SK-N-SH (cell line): ENCODE measurements at regions of chr2 and their contacts with region 1.

Region 1: GRCh38 chr2:45993476-45993991 is 303.7 kb upstream of the EPAS1 start:
- DNase-seq: peak; percentile 70
- H3K4me3 ChIP-seq: no peak overlapping the region; a peak in 1 of 4 replicates
- H3K27ac ChIP-seq: no peak overlapping the region
- H3K4me1 ChIP-seq: peaks cover 0 to 5% of the 10 kb centered on the region in 2 experiments; a peak in 1 of 4 replicates
- H3K27me3 ChIP-seq: no peaks in the 10 kb centered on the region
- CTCF ChIP-seq: peak; percentile 94
- EP300 ChIP-seq: no peak
- RAD21 ChIP-seq: peak; percentile 93

Region 2: DNA sequence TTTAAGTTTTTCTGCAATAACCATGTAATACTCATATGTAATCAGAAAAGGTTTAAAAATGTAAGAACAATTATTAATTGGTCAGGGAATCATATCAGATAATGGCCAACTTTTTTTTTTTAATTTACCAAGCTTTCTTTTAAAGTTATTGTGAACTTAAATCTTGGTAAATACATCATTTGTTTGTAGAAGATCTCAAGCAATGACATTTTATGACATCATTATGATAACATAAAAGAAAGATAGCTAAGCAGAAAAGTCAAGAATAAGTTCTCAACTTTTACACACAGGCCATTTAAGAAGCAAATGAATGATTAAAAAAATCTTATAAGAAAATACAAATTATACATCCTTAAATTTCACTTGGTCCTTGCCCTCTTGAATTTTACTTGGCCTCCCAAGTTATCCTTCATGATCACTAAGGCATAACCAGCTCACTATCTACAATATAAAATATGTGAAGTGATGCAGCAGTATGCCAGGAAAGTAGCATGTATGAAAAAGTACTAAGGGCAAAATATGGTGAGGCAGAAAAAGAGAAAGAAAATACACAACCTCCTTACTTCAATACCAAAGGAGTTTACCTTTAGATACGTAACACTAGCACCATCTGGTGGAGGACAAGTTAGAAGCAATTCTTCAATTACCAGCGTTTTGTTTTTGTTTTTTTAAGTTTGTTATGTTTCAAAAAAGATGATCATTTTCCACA is 499.1 kb before region 1 on chr2:
- CTCF ChIA-PET with region 1: no interaction called
- POLR2A ChIA-PET with region 1: no interaction called
- DNase-seq: peak; percentile 56
- H3K4me3 ChIP-seq: peak overlapping the region in 1 of 2 experiments; percentile 7; a peak in 1 of 4 replicates
- H3K27ac ChIP-seq: no peak overlapping the region; a peak in 1 of 4 replicates
- H3K4me1 ChIP-seq: peaks cover 0 to 4% of the 10 kb centered on the region in 2 experiments; a peak in 1 of 4 replicates
- H3K27me3 ChIP-seq: no peaks in the 10 kb centered on the region
- CTCF ChIP-seq: peak; percentile 93
- EP300 ChIP-seq: no peak
- RAD21 ChIP-seq: peak; percentile 97

Region 3: DNA sequence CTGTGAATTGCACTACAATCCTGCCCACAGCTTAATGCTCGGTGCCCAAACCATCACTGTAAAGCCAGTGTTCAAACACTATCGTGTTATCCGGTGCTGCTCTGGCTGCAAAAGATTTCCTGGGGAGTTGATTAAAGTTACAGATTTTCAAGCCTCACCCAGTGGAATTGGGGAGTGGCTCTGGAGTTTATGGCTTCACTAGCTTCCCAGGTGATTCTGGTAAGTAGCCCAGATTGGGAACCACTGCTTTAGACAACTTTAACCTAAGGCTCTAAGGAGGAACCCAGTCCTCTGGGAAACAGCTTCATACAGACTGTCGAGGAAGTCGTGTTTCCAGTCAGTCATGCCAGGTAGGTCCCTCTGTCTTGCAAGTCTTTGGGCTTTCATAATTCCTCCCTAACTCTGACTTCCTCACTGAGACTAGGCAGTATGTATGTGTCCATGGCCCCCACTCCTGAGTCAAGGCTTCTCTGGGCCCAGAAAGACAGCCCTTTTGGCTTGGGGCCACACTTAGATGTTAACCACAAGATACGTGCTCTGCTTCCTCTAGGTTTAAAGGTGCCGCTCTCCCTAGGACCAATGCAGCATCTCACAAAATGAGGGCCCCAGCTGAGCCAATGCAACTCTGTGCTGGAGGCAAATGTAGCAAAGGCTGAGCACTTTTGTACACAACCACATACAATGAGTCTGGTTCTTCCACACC is 42.4 kb before region 1 on chr2:
- CTCF ChIA-PET with region 1: interaction called, 11 read pairs
- POLR2A ChIA-PET with region 1: no interaction called
- DNase-seq: no peak
- H3K4me3 ChIP-seq: no peak overlapping the region
- H3K27ac ChIP-seq: no peak overlapping the region
- H3K4me1 ChIP-seq: peaks cover 8 to 13% of the 10 kb centered on the region in 2 experiments; a peak in 3 of 4 replicates
- H3K27me3 ChIP-seq: no peaks in the 10 kb centered on the region
- CTCF ChIP-seq: no peak
- EP300 ChIP-seq: no peak
- RAD21 ChIP-seq: no peak

Region 4: DNA sequence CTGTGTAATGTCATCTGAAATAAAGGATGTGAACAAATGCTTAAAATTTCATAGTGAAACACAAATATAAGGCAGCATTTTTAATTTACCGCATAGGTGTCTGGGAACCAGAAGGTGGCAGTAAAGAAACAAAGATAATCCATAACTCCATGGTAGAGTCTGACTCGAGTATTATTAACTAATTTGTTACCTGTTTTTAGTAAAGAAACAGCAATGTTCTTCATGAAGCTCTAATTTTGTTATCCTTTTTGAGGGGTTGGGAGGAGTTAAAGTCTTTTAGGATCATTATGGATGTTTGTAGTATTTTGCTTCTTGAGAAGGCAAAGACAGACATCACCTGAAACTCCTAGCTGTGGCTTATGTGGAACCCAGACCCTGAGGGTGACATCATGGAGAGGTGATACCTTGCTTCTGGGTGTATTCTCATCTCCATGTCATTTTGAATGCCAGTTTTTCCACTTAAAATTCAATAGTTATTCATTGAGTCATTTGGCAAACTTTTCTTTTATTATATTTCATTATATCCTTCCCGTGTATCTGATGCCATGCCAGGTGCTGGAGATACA is 17.5 kb after region 1 on chr2:
- CTCF ChIA-PET with region 1: interaction called, 89 read pairs
- POLR2A ChIA-PET with region 1: no interaction called
- DNase-seq: peak; percentile 72
- H3K4me3 ChIP-seq: no peak overlapping the region
- H3K27ac ChIP-seq: peak overlapping the region in 1 of 2 experiments; percentile 28; a peak in 2 of 4 replicates
- H3K4me1 ChIP-seq: peaks cover 8 to 23% of the 10 kb centered on the region in 2 experiments; a peak in 3 of 4 replicates
- H3K27me3 ChIP-seq: no peaks in the 10 kb centered on the region
- CTCF ChIP-seq: peak; percentile 92
- EP300 ChIP-seq: no peak
- RAD21 ChIP-seq: peak; percentile 93

Region 5: GRCh38 chr2:46062637-46063412 is 69.3 kb after region 1 on chr2:
- CTCF ChIA-PET with region 1: interaction called, 16 read pairs
- POLR2A ChIA-PET with region 1: no interaction called
- DNase-seq: peak; percentile 82
- H3K4me3 ChIP-seq: no peak overlapping the region; a peak in 1 of 4 replicates
- H3K27ac ChIP-seq: no peak overlapping the region
- H3K4me1 ChIP-seq: peaks cover 14 to 25% of the 10 kb centered on the region in 2 experiments
- H3K27me3 ChIP-seq: no peaks in the 10 kb centered on the region
- CTCF ChIP-seq: peak; percentile 99
- EP300 ChIP-seq: no peak
- RAD21 ChIP-seq: peak; percentile 97

Region 6: GRCh38 chr2:46400016-46400415 is 406.5 kb after region 1 on chr2:
- CTCF ChIA-PET with region 1: no interaction called
- POLR2A ChIA-PET with region 1: no interaction called
- DNase-seq: no peak
- H3K4me3 ChIP-seq: no peak overlapping the region
- H3K27ac ChIP-seq: no peak overlapping the region
- H3K4me1 ChIP-seq: no peaks in the 10 kb centered on the region; a peak in 2 of 4 replicates
- H3K27me3 ChIP-seq: no peaks in the 10 kb centered on the region
- CTCF ChIP-seq: no peak
- EP300 ChIP-seq: no peak
- RAD21 ChIP-seq: no peak

Region 7: DNA sequence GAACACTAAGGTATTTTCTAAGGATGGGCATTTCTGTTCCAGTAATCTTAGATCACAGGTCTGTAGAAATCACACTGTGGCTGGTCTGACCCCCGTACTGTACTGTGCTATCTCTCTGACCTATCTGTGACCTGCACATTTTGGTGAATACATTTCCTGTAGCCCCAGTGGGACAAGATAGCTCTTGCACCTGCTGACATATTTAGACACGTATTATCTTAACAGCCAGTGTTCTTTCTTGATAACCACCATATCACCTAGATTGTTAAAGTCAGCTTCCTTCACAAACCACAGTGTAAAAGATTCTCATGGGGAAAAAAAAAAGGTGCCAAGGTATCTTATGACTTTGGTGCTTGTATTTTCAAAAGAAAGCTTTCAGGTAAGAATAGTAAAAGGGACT is 446.0 kb after region 1 on chr2:
- CTCF ChIA-PET with region 1: interaction called, 13 read pairs
- POLR2A ChIA-PET with region 1: no interaction called
- DNase-seq: no peak
- H3K4me3 ChIP-seq: no peak overlapping the region
- H3K27ac ChIP-seq: no peak overlapping the region
- H3K4me1 ChIP-seq: peaks cover 0 to 5% of the 10 kb centered on the region in 2 experiments; a peak in 2 of 4 replicates
- H3K27me3 ChIP-seq: no peaks in the 10 kb centered on the region
- CTCF ChIP-seq: no peak
- EP300 ChIP-seq: no peak
- RAD21 ChIP-seq: no peak